HEK293T (cell line): ENCODE measurements at regions of chr2 and their contacts with region 1.

Region 1: GRCh38 chr2:222753251-222753824 is 81.9 kb downstream of the MOGAT1 start:
- DNase-seq: peak; percentile 33

Region 2: DNA sequence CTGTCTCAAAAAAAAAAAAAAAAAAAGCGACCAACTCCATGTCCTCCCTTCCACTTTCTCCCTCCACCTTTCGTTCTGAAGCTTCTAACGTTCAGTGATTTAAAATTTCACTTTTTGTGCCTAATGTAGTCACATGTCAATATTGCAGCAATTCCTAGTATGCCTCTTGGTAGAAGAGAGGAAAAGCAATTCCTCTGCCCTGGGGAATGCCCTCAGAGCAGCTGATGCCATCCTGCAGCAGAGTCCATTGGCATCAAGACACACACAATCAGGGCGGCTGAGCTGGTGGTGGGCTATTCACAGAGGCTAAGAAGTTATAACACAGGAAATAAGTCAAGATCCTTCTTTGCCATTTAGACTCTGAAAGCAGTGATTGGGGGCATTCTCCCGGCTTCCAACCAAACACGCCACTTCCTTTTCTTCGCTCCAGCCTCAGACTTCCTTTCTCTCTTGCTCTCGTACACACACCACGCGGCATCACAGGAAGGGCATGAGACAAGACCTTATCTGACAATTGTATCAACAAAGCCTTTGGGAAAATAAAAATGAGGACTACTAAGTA is 10.0 kb before region 1 on chr2:
- CTCF ChIA-PET with region 1: no interaction called
- POLR2A ChIA-PET with region 1: no interaction called
- DNase-seq: no peak

Region 3: DNA sequence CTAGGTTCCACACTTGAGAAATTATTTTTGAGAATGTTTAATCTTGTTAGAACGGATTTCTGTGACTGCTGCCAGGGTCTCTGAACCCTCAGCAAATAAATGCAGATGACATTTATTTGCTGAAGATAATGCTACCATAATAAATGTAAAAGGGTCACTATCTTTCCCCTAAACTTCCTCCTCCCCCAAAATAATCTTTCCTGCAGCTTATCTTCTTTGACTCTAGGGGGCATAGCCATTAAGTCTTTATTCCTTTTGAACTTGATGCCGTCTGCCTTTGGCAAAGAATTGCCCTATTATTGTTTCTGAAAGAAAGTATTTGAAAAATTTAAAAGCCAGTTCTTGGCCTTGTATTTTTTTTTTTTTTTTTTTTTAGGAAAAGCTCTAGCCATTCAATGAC is 43.9 kb after region 1 on chr2:
- CTCF ChIA-PET with region 1: interaction called, 10 read pairs
- POLR2A ChIA-PET with region 1: no interaction called
- DNase-seq: peak; percentile 38

Region 4: DNA sequence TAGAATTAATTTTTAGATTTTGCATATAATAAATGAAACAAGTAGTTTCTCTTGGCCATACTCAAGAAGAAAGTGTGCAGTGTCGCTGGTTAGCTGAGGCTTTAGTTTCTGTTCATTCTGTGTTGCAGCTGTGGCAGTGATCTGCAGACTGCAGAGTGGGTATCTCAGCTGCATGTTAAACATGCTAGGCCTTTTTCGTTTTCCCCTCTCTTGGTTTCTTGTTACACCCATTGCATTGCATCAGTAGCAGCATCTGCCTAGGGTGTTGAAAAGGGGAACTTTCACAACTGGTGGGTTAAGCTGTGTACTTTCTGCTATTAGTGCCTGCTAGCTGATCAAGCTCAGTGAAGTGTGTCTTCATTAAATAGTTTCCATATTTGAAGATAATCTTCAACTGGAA is 158.8 kb after region 1 on chr2:
- CTCF ChIA-PET with region 1: no interaction called
- POLR2A ChIA-PET with region 1: no interaction called
- DNase-seq: no peak